Sciatic nerve (tissue), 2 donors: ENCODE measurements at regions of chr1 and their contacts with region 1.

Region 1: GRCh38 chr1:26154750-26155149 is 4.1 kb upstream of the FAM110D start:
- DNase-seq: peak; percentile 47
- ATAC-seq: no peak

Region 2: GRCh38 chr1:26035959-26036755 is 118.6 kb before region 1 on chr1:
- intact Hi-C with region 1: loop called (anchors 5 kb)
- DNase-seq: peak; percentile 92
- ATAC-seq: peak; percentile 96